ENCODE measurements at regions of chrX and their contacts with region 1.

Region 1: DNA sequence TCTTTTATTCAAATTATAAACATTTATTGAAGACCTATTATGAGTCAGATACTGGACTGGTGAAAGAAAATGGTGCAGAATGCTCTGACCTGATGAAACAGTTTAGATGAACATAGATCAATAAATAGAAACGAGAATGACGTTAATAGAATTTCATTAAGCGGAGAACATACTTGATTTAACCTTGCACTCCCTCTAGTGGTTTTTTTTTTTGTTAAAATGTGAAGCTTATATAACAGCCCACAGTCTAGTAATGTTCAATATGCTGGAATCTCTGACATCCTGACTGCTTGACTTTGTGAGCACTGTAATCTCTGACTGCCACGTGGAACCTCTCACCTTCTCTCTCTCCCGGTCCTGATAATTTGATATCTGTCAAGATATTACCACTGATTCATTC is 32.3 kb downstream of the HDAC8 start:
- DNase-seq: no peak
- CTCF ChIP-seq: peak; percentile 15

Region 2: DNA sequence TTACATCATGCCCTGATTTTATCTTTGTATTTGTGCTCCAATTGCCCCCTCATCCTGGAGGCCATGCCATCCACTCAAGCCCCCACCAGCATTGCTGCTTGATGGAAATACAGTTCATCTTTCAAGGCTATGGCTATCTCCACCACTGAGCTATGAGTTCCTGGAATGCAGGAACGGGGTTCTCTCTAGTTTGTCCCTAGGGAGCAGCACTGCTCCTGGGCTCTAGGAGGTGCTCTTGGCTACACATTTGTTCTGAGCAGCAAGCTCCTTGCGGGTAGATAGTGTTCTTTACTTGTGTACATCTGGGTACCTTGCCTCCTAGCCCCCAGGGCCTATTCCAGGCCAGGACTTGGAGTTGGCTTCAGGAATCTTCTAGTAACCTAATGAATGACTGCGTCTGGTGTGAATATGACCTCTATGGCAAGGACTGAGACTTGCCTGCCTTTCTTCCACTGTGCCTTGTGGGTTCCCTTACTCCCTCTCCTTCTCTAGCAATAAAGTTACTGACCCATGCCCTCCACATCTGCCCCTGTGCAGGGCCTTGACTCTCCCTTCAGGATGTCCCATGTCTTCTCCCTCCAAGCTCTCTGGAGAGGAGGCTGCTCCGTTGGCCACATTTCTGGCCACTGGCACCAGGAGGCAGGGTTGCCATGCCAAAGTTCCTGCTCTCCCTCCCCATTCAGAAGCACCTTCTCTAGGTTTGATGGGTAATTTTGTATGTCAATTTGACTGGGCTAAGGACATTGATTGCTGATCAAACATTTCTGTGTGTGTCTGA is 242.2 kb before region 1 on chrX:
- in situ Hi-C with region 1: loop called (anchors 25 kb)
- DNase-seq: no peak
- CTCF ChIP-seq: peak; percentile 59

Region 3: GRCh38 chrX:72371405-72371804 is 168.9 kb before region 1 on chrX:
- in situ Hi-C with region 1: no loop called
- DNase-seq: no peak
- CTCF ChIP-seq: no peak

Region 4: DNA sequence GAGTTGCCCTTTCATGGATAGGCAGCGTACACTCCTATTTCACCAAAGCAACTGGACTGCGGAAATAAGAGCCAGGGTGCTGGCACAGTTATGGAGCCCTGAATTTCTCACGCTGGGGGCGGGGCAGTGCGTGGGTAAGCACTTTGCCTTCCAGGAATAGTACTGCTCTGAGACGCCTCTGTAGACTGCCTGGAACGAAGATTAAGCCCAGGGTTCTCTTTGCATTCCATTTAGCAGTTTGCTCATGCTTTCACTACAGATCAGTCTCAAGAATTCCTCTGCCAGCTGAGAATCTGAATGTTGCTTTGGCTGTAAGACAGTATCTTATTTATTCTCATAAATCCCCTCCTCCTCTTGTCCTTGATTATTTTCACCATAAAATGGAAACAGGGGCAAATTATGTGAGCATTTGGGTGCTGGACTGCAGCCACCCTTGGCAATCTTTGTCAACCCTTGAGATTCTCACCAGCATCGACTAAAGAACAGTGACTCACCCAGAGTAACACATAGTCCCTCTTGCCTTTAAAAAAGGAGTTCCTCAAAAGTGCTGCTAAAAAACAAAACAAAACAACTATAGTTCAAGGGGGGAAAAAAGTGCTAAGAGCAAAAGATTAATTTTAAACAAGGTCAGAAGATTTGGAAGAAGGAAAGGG is 145.7 kb before region 1 on chrX:
- in situ Hi-C with region 1: no loop called
- DNase-seq: no peak
- CTCF ChIP-seq: no peak

Region 5: GRCh38 chrX:72421797-72422196 is 118.5 kb before region 1 on chrX:
- in situ Hi-C with region 1: no loop called
- DNase-seq: no peak
- CTCF ChIP-seq: no peak

Region 6: DNA sequence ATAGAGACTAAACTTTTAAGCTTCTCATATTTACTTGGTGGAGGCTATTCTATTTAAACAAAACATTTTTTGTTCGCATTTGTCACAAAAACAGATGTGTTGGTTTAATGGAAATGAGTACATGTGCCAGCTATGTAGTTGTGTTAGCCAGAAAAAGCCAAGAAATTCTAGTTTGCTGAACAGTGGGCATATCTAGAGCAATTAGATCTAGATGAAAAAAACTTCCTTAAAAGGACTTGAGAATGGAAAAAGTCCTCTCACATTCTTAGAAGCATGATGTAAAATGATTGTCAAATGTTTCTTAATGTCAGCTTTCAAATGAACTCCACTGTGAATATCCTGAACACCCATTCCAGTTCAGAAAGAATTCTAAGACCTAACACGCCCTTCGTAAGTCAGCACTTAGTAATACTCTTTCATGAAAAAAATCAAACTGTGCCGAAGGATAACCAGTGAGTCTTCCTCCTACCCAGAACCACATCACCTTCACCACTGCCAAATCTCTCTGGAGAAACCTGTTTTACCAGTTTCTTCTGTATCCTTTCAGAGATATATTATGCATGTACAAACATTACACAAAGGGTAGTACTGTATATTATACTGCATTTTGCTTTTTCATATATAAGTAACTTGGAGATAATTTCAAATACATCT is 145.6 kb after region 1 on chrX:
- in situ Hi-C with region 1: no loop called
- DNase-seq: no peak
- CTCF ChIP-seq: no peak